PC-9 (cell line): ENCODE measurements at regions of chr9 and their contacts with region 1.

Region 1: GRCh38 chr9:109012876-109013678 is at the start of gene CTNNAL1:
- DNase-seq: peak; percentile 49 to 95
- H3K4me3 ChIP-seq: peak within 1 kb of the TSS; percentile 72
- H3K27ac ChIP-seq: peak within 1 kb of the TSS; percentile 77
- H3K4me1 ChIP-seq: peaks cover 74% of the 10 kb centered on the region
- H3K27me3 ChIP-seq: no peaks in the 10 kb centered on the region
- CTCF ChIP-seq: no peak
- total RNA-seq, gene CTNNAL1: 57.7 and 71.3 TPM in 2 replicates

Region 2: GRCh38 chr9:108933718-108934322 is 79.3 kb before region 1 on chr9 and contains the start of gene ELP1:
- CTCF ChIA-PET with region 1: no interaction called
- POLR2A ChIA-PET with region 1: interaction called, 4 read pairs
- intact Hi-C with region 1: loop called (anchors 2 kb)
- DNase-seq: peak; percentile 91 to 93
- H3K4me3 ChIP-seq: peak within 1 kb of the TSS; percentile 99
- H3K27ac ChIP-seq: peak within 1 kb of the TSS; percentile 80
- H3K4me1 ChIP-seq: peaks cover 20% of the 10 kb centered on the region
- H3K27me3 ChIP-seq: no peaks in the 10 kb centered on the region
- CTCF ChIP-seq: no peak
- total RNA-seq, gene ELP1: 29.6 and 35.1 TPM in 2 replicates

Region 3: GRCh38 chr9:108953983-108954574 is 59.0 kb before region 1 on chr9:
- CTCF ChIA-PET with region 1: no interaction called
- POLR2A ChIA-PET with region 1: no interaction called
- intact Hi-C with region 1: no loop called
- DNase-seq: no peak
- H3K4me3 ChIP-seq: no peak overlapping the region
- H3K27ac ChIP-seq: no peak overlapping the region
- H3K4me1 ChIP-seq: no peaks in the 10 kb centered on the region
- H3K27me3 ChIP-seq: no peaks in the 10 kb centered on the region
- CTCF ChIP-seq: peak; percentile 76

Region 4: DNA sequence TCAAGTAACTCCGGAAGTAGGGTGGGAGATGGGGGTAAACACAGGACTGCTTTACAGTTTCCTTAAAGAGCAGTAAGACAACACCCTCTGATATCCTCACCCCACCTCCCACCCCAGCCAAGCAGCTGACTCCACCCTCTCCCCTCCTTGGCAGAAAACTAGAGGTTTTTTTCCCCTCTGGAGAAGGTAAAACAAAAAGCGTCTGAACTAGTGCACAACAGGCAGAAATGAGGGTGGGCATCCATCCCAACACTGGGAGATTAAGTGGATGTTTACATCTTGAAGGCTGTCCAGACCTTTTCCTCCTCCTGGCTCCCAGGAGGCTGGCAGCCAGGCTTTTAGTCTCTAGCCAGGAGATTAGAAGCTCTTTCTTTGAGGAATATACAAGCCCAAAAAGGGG is 14.1 kb after region 1 on chr9:
- CTCF ChIA-PET with region 1: no interaction called
- POLR2A ChIA-PET with region 1: interaction called, 10 read pairs
- intact Hi-C with region 1: no loop called
- DNase-seq: no peak
- H3K4me3 ChIP-seq: no peak overlapping the region
- H3K27ac ChIP-seq: no peak overlapping the region
- H3K4me1 ChIP-seq: peaks cover 41% of the 10 kb centered on the region
- H3K27me3 ChIP-seq: no peaks in the 10 kb centered on the region
- CTCF ChIP-seq: no peak

Region 5: DNA sequence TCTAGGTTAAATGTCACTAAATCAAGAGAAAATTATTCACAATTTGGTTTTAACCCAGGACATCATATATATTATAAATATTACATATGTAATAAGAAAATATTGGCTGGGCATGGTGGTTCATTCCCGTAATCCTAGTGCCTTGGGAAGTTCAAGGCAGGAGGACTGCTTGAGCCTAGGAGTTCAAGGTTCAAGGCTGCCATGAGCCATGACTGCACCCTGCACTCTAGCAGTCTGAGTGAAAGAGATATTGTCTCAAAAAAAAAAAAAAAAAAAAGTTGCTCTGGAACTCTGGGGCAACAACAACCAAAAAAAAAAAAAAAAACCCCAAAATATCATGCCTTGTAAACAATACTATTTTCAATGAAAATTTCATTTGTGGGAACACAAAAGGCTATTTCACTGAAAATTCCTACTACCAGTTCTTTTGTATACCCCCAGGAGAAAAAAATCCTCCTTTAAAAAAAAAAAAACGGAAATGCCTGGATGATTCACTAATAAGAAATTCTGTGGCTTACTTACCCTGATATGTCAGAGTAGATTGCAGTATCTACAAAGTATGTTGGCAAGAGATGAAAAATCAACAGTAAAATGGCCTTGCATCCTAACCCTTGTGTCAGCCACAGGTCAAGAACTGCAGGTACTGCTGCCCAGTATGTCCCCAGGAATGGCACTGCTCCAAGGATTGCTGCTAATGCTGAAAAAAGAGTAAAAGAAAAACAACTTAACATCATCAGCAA is 22.8 kb after region 1 on chr9:
- CTCF ChIA-PET with region 1: no interaction called
- POLR2A ChIA-PET with region 1: interaction called, 4 read pairs
- intact Hi-C with region 1: loop called (anchors 1 kb)
- DNase-seq: peak; percentile 83 to 99
- H3K4me3 ChIP-seq: no peak overlapping the region
- H3K27ac ChIP-seq: peak overlapping the region; percentile 67
- H3K4me1 ChIP-seq: peaks cover 69% of the 10 kb centered on the region
- H3K27me3 ChIP-seq: no peaks in the 10 kb centered on the region
- CTCF ChIP-seq: no peak

Region 6: DNA sequence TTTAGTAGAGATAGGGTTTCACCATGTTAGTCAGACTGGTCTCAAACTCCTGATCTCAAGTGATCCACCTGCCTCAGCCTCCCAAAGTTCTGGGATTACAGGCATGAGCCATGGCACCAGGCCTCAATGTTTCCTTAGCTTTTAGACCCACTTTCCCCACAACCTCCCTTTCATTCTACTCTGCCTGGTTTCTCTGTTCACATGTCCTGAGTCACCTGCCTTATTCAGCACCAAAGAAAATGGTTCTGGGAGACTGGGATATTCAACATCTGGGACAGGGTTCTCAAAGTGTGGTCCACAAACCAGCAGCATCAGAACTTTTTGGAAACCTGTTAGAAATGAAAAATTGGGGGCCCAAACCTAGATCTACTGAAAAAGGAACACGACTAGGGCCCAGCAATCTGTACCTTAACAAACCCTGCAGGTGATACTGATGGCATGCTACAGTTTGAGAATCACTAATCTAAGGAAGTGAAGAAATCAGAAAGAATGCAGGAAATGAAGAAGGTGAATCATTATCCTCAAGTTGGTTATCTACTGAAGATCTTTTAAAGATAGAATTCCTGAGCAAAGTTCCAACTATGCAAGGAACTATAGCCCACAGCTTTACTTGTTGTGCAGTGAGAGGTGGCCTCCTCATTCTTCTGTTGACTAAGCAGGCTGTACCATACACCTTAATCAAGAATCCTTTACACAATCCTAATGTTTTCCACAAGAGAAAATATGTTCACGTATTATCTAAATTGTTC is 52.1 kb after region 1 on chr9:
- CTCF ChIA-PET with region 1: no interaction called
- POLR2A ChIA-PET with region 1: interaction called, 25 read pairs
- intact Hi-C with region 1: loop called (anchors 1 kb)
- DNase-seq: peak; percentile 35 to 98
- H3K4me3 ChIP-seq: no peak overlapping the region
- H3K27ac ChIP-seq: peak overlapping the region; percentile 94
- H3K4me1 ChIP-seq: peaks cover 58% of the 10 kb centered on the region
- H3K27me3 ChIP-seq: no peaks in the 10 kb centered on the region
- CTCF ChIP-seq: no peak

Region 7: GRCh38 chr9:109098171-109098959 is 85.3 kb after region 1 on chr9:
- CTCF ChIA-PET with region 1: no interaction called
- POLR2A ChIA-PET with region 1: no interaction called
- intact Hi-C with region 1: loop called (anchors 5 kb)
- DNase-seq: peak; percentile 48 to 75
- H3K4me3 ChIP-seq: peak overlapping the region; percentile 9; the same call in 1 of the 2 replicates
- H3K27ac ChIP-seq: peak overlapping the region; percentile 93
- H3K4me1 ChIP-seq: peaks cover 68% of the 10 kb centered on the region
- H3K27me3 ChIP-seq: no peaks in the 10 kb centered on the region
- CTCF ChIP-seq: peak; percentile 36; the same call in 1 of the 2 replicates

Region 8: DNA sequence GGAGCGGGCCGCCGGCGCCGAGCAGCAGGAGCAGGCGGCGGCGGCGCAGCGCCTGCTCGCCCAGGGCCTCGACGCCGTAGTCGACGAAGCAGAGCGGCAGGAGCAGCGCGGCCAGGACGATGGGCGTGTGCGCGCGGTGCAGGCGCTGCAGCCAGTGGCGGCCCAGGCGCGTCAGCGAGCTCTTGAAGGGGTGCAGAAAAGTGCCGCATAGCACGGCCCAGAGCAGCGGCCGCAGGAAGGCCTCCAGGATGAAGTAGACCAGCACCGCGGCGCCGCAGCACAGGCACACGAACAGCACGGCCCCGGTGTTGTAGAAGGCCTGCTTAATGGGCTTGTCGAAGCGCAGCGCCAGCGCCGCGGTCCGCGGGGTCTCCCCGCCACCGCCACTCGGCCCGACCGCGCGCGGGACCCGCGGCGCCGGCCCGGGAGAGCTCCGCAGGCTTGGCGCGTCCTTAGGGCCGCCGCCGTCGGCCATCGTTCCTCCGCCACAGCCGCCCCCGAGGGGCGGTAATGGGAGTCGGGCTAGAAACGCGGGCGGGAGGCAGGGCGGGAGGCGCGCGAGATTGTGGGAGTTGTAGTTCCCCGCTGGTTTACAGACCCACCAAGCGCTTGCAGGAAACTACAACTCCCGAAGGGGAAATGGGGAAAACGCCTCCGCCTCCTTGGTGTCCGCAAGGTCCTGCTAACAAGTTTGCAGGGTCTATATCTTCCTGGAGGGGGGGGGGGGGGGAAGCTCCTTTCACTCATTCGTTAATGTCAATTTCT is 106.5 kb after region 1 on chr9 and contains the start of gene TMEM245:
- CTCF ChIA-PET with region 1: no interaction called
- POLR2A ChIA-PET with region 1: interaction called, 9 read pairs
- intact Hi-C with region 1: loop called (anchors 1 kb)
- DNase-seq: peak; percentile 95 to 97
- H3K4me3 ChIP-seq: peak within 1 kb of the TSS; percentile 81
- H3K27ac ChIP-seq: peak within 1 kb of the TSS; percentile 38
- H3K4me1 ChIP-seq: peaks cover 35% of the 10 kb centered on the region
- H3K27me3 ChIP-seq: no peaks in the 10 kb centered on the region
- CTCF ChIP-seq: no peak
- total RNA-seq, gene TMEM245: 58.7 and 60.3 TPM in 2 replicates

Region 9: GRCh38 chr9:109224751-109225150 is 211.7 kb after region 1 on chr9:
- CTCF ChIA-PET with region 1: no interaction called
- POLR2A ChIA-PET with region 1: no interaction called
- intact Hi-C with region 1: no loop called
- DNase-seq: no peak
- H3K4me3 ChIP-seq: no peak overlapping the region
- H3K27ac ChIP-seq: no peak overlapping the region
- H3K4me1 ChIP-seq: no peaks in the 10 kb centered on the region
- H3K27me3 ChIP-seq: no peaks in the 10 kb centered on the region
- CTCF ChIP-seq: no peak